ENCODE measurements at regions of chr5 and their contacts with region 1.

Region 1: GRCh38 chr5:89729623-89730301 is 679.8 kb downstream of the CETN3 start:
- DNase-seq: no peak
- ATAC-seq: no peak

Region 2: DNA sequence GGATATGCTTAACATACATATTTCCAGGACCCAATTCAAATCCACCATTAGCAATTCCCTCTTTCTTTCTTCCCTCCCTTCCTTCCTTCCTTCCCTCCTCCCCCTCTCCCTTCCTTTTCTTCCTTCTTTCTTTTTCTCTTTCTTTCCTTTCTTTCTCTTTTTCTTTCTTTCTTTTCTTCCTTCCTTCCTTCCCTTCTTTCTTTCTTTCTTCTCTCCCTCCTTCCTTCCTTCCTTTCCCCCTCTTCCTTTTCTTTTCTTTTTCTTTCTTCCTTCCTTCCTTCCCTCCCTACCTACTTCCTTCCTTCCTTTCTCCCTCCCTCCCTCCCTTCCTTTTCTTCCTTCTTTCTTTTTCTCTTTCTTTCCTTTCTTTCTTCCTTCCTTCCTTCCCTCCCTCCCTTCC is 1793.1 kb before region 1 on chr5:
- intact Hi-C with region 1: loop called (anchors 5 kb)
- DNase-seq: no peak
- ATAC-seq: no peak

Region 3: DNA sequence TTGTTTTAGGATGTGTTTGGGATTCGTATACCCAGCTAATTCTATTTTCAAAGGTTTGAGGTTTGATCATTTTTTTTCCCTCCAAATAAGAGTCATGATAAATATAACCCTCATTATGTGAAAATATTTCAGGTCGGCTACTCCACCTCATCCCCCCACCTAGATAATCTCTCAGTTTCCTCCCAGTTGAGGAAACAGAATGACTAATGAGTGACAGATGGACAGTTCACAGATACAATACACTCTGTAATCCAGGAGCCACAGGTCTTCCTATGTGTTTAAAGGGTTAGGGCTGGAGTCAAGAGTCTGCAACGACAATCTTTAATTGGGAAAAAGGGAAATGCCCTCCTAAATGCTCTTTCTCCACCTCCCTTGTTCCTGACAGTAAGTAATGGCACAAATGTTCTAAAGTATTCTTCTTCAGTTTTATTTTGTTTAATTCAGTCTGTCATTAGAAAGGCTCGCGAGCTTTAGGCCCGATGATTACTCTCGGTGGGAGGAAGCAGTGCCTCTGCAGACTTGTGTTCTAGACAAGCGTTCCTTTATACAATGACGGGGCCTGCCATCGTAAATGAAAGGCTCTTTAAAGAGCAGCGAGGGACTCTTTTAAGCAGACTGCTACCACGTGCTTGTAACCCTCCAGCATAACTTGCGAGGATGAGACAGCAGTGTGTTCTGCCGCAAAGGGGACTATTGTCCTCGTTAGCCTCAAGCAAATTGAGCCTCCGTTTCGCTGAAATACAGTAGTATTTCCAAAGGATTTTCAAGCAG is 915.8 kb before region 1 on chr5:
- intact Hi-C with region 1: no loop called
- DNase-seq: no peak
- ATAC-seq: no peak